ENCODE measurements at regions of chr16 and their contacts with region 1.

Region 1: GRCh38 chr16:8660841-8661301 is 13.5 kb upstream of the ABAT start:
- DNase-seq: peak; percentile 72
- H3K4me3 Mint-ChIP-seq: no peak overlapping the region
- H3K27ac Mint-ChIP-seq: no peak overlapping the region
- H3K4me1 Mint-ChIP-seq: no peaks in the 10 kb centered on the region
- H3K27me3 Mint-ChIP-seq: no peaks in the 10 kb centered on the region

Region 2: DNA sequence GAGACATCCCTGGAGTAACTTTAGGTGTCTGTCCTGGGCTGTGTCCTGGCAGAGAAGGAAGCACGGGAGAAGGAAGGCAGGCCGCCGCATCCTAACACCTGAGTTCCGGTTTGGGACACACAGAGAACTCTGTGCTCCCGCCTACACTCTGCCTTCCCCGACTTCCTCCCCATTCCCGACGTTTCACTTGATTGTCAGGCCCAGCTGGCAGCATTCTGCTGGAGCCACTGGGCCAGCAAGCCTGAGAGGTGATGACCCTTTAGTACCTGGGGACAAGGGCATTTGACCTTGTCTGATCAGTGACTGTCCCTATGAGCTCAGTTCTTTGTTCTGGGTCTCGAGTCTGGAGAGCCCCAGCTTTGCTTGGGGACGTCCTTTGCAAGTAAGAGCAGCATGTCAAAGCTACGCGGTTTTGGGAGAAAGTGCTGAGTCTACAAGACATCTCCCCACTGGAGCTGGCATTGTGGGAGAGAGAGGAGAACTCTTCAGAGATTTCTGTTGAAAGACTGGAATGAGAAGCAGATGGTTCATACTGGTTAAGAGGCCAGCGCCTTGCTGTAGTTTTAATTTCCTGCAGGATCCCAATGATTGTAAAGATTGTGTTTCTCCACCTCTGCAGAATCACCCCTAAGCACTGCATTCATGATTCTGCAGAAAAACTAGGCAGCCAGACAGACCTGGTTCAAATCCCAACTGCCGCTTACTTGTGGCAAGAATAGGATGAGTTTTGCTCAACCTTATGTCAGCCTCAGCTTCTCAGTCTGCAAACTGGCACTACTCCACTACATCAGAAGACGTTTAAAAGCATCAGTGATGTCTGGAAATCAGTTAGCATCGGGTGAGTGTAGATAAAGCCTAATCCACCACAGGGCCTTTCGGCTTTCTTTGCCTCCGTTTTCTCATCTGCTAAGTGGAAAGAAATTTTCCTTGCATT is 34.2 kb after region 1 on chr16:
- CTCF ChIA-PET with region 1: no interaction called
- DNase-seq: no peak
- H3K4me3 Mint-ChIP-seq: no peak overlapping the region
- H3K27ac Mint-ChIP-seq: no peak overlapping the region
- H3K4me1 Mint-ChIP-seq: no peaks in the 10 kb centered on the region
- H3K27me3 Mint-ChIP-seq: no peaks in the 10 kb centered on the region

Region 3: GRCh38 chr16:8740775-8741355 is 80.0 kb after region 1 on chr16:
- CTCF ChIA-PET with region 1: no interaction called
- DNase-seq: no peak
- H3K4me3 Mint-ChIP-seq: no peak overlapping the region
- H3K27ac Mint-ChIP-seq: no peak overlapping the region
- H3K4me1 Mint-ChIP-seq: no peaks in the 10 kb centered on the region
- H3K27me3 Mint-ChIP-seq: no peaks in the 10 kb centered on the region

Region 4: DNA sequence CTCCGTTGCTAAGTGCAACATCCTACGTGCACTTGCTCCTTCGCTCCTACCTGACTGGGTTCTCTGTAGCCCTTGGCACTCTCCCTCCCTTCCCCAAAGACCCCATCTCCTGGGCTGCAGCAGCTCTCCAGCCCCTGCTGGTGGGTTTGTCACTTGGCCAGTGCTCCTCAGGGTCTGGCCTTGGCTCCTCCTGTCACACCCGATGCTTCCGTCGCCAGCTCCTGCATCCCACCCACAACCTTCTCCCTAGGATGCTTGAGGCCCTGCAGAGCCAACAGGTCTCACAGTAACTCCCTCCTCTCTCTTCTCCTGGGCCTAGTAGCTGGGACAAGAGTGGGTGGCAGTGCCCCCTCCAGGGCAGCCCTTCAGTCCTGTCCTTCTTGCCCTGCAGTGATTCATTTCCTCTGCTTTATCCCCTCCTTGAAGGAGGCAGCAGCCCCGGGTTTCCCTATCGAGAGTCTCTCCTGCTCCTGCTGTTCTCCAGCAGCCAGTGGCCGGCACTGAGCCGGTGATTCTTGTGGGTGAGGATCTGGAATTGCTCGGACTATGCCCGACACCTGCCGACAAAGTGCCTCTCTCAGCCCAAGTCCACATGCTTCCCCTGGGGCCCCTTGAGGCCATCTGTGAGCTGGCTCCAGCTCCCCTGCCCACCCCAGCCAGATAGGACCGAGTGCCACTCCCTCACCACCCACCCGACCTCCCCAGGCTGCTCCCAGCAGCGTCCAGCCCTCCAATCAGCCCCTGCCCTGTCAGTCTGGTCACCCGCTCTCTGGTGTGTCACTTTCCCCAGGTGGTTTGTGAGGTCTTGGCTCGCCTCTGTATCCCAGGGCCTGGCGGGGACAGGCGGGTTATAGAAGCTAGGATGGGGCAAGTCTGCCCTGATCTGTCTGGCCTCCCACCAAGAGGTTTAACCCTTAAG is 225.1 kb after region 1 on chr16:
- CTCF ChIA-PET with region 1: interaction called, 55 read pairs
- DNase-seq: no peak
- H3K4me3 Mint-ChIP-seq: no peak overlapping the region
- H3K27ac Mint-ChIP-seq: peak overlapping the region; percentile 81
- H3K4me1 Mint-ChIP-seq: peaks cover 5% of the 10 kb centered on the region
- H3K27me3 Mint-ChIP-seq: peaks cover 34% of the 10 kb centered on the region